ENCODE measurements at regions of chr12 and their contacts with region 1.

Region 1: DNA sequence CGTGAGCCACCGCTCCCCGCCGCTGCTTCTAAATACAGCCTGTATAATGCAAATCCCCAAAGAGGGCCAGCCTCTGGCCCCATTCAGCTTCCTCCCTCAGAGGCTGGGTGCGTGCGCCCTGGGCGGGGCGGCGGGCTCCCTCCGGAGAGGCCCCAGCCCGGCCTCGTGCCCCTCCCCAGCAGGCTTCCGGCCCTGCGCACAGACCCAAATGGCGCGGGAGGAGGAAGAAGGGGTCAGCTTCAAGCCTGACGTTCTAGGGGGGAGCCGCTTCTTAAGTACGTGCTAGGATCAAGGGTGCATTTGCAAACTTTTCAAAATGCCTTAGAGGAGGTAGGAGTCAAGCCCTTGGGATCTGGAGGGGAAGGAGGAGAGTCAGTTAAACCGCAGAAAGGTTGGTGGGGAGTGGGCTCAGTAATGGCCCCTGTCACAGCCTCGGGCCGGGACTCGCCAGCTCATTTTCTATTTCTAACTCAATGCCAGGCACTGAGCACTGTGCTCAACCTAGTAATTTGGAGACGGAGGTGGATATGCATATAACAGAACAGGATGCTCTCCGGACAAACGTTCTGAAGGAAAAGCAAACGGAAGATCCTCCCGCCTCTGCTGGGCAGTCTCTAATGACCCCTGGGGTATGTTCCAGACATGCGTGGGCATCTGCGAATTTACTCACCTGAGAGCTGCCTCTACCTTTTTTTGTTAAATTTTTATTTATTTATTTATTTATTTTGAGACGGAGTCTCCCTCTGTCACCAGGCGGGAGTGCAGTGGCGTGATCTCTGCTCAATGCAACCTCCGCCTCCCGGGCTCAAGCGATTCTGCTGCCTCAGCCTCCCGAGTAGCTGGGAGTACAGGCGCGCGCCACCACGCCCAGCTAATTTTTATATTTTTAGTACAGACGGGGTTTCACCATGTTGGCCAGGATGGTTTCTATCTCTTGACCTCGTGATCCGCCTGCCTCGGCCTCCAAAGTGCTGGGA is 32.3 kb downstream of the NINJ2 start:
- DNase-seq: peak; percentile 88
- H3K4me3 Mint-ChIP-seq: peak overlapping the region; percentile 88
- H3K27ac Mint-ChIP-seq: peak overlapping the region; percentile 98
- H3K4me1 Mint-ChIP-seq: peaks cover 51% of the 10 kb centered on the region
- H3K27me3 Mint-ChIP-seq: no peaks in the 10 kb centered on the region

Region 2: DNA sequence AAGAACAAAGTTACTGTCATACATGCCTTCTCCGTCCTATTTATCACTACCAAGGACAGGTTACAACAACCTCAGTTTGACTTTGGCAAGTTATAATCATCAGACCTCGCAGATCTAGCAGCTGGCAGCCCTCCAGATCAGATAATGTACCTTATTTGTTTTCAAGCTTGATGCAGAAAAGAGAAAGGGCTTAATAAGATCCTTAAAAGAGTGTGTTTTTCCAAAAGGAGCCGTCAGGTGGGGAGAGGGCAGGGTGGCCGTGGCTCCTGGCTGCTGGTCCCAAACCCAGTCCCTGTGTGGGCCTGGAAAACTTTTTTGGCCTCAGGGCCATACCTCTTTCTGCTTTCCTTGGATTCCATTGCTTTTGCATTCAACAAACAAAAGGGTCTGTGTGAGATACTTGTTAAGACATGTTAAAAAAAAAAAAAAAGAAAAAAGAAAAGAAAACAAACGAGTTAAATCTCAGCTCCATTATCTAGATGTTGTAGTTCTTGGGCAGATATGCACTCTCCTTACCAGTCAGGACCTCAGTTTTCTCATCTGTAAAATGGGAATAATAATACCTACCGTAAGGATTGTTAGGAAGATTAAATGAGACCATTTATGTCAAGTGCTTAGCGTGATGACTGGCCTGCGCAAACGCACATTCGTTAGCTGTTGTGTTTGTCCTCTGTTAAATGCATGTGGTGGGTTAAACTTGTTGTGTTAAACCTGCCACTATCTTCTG is 106.6 kb before region 1 on chr12:
- CTCF ChIA-PET with region 1: no interaction called
- POLR2A ChIA-PET with region 1: no interaction called
- DNase-seq: no peak
- H3K4me3 Mint-ChIP-seq: no peak overlapping the region
- H3K27ac Mint-ChIP-seq: no peak overlapping the region
- H3K4me1 Mint-ChIP-seq: no peaks in the 10 kb centered on the region
- H3K27me3 Mint-ChIP-seq: peaks cover 3% of the 10 kb centered on the region

Region 3: GRCh38 chr12:614411-614970 is 16.5 kb before region 1 on chr12:
- CTCF ChIA-PET with region 1: interaction called, 10 read pairs
- POLR2A ChIA-PET with region 1: interaction called, 7 read pairs
- DNase-seq: peak; percentile 32
- H3K4me3 Mint-ChIP-seq: no peak overlapping the region
- H3K27ac Mint-ChIP-seq: no peak overlapping the region
- H3K4me1 Mint-ChIP-seq: peaks cover 50% of the 10 kb centered on the region
- H3K27me3 Mint-ChIP-seq: no peaks in the 10 kb centered on the region

Region 4: GRCh38 chr12:659090-659705 is 28.3 kb after region 1 on chr12:
- CTCF ChIA-PET with region 1: no interaction called
- POLR2A ChIA-PET with region 1: no interaction called
- DNase-seq: no peak
- H3K4me3 Mint-ChIP-seq: no peak overlapping the region
- H3K27ac Mint-ChIP-seq: no peak overlapping the region
- H3K4me1 Mint-ChIP-seq: peaks cover 29% of the 10 kb centered on the region
- H3K27me3 Mint-ChIP-seq: no peaks in the 10 kb centered on the region